Activated T-helper 1 cell treated with anti-CD3 and anti-CD28 coated beads, Interleukin-12 subunit alpha, Interleukin-12 subunit beta, Interleukin-2, Interleukin-4 antibody, amounts not matched to agents 30 ng/mL and 10 ng/mL and 1 ng/mL, durations not matched to agents 14 hours and 24 hours and 36 hours (primary cell): ENCODE measurements at regions of chr14 and their contacts with region 1.

Region 1: GRCh38 chr14:63770187-63770807 is 42.4 kb upstream of the SGPP1 start:
- DNase-seq: peak; percentile 33
- H3K4me3 Mint-ChIP-seq: no peak overlapping the region
- H3K27ac Mint-ChIP-seq: no peak overlapping the region
- H3K4me1 Mint-ChIP-seq: peaks cover 17% of the 10 kb centered on the region
- H3K27me3 Mint-ChIP-seq: no peaks in the 10 kb centered on the region

Region 2: DNA sequence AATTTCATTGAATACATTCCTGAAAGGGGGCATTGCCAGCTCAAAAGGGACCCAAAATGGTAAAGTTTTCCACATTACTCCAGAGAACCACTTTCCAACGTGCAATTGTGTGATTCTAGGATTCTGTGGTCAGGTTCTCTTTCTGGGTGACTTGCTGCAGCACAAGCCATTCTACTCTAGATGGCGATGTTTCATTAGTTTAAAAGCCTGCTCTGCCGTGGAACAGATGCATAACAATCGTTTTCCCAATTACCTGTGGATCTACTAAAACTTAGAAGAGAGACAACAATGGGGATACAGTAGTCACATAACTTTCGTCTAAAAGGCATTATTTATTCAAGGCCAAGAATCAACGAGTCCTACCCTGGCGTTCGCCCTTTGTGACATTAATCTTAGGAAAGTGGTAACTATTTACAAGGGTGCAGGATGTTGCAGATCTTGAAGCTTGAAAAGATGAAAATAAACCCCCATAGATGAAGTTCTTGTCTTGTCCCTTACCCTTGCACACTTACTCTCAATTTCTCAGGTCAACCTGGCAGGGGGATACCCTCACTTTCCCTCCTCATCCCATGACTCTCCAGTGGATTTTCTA is 1607.2 kb before region 1 on chr14:
- intact Hi-C with region 1: loop called (anchors 5 kb)
- DNase-seq: peak; percentile 3
- H3K4me3 Mint-ChIP-seq: no peak overlapping the region
- H3K27ac Mint-ChIP-seq: no peak overlapping the region
- H3K4me1 Mint-ChIP-seq: no peaks in the 10 kb centered on the region
- H3K27me3 Mint-ChIP-seq: peaks cover 5% of the 10 kb centered on the region

Region 3: DNA sequence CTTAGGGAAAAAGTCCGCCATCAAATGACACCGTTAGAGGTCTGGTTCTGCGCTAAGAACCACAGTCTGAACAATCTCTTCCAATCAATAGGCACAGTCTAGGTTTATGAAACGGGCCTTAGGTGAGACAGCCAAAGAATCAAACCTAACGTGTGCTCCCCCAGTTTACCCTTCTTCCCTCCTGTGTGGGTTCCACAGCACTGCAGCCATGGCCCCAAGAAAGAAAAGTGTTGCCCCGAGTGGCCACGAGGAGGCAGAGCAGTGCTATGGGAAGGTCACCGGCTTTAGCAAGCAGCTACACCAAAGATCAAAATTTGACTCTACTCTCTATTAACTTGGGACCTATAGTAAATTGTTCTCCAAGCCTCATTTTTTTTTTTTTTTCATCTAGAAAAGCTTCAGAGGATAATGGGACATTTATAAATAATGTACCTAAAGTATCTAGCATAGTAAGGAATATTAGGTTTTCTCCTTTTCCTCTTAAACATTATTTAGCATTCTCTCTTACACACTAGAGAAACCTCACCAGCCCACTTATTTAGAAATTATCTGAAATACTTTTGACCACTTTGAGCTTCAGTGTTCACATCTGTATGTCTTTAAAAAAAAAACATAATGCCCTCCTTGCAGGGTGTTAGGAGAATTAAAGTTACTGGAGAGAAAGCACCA is 381.4 kb before region 1 on chr14:
- intact Hi-C with region 1: loop called (anchors 1 kb)
- DNase-seq: peak; percentile 35
- H3K4me3 Mint-ChIP-seq: no peak overlapping the region
- H3K27ac Mint-ChIP-seq: no peak overlapping the region
- H3K4me1 Mint-ChIP-seq: peaks cover 8% of the 10 kb centered on the region
- H3K27me3 Mint-ChIP-seq: no peaks in the 10 kb centered on the region

Region 4: GRCh38 chr14:63632932-63633514 is 137.3 kb before region 1 on chr14:
- intact Hi-C with region 1: loop called (anchors 1 kb)
- DNase-seq: no peak
- H3K4me3 Mint-ChIP-seq: no peak overlapping the region
- H3K27ac Mint-ChIP-seq: no peak overlapping the region
- H3K4me1 Mint-ChIP-seq: peaks cover 18% of the 10 kb centered on the region
- H3K27me3 Mint-ChIP-seq: no peaks in the 10 kb centered on the region

Region 5: DNA sequence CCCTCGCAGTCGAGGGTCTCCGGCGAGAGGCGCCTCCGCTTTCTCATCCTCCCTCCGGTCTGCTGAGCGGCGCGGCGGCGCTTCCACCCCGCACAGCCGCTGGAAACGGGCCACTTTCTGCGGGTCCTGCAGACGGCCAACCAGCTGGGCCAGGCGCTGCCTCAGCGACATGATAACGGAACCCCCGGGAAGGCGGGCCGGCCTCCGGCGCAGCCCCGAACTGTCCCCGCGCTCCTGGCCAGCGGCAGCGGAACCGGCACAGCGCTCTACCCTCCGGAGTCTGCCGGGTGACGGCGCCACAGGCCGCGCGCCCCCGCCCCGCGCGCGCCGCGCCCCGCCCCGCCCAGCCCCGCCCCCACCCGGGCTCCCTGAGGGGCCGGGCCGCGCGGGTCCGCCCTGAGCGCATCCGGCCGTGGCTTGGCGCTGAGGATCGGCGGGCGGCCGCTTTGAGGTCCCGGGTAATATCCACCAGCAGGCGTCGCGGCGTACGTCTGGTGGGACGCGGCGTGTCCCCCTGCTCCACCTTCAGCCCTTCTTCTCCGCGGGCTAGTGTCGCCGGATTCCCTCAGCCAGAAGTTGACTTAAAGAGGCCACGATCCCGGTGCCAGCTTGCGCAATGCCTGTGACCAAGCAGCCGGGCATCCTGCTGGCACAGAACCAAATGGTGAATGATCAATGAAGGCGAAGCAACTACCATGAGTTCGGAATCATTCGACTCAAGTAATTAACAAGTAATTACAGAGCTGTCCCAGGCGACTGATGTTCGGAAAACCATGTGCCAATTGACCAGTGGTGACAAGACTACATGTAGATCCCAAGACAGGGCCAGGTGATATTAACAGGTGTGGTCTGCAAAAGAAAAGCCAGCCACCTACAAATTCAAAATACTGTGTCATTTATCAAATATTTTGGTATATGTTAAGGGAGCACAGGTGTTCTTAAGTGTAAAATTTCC is 42.2 kb before region 1 on chr14 and contains the start of gene SGPP1:
- intact Hi-C with region 1: loop called (anchors 1 kb)
- DNase-seq: peak; percentile 81
- H3K4me3 Mint-ChIP-seq: peak within 1 kb of the TSS; percentile 99
- H3K27ac Mint-ChIP-seq: peak within 1 kb of the TSS; percentile 99
- H3K4me1 Mint-ChIP-seq: peaks cover 33% of the 10 kb centered on the region
- H3K27me3 Mint-ChIP-seq: peaks cover 16% of the 10 kb centered on the region
- total RNA-seq, gene SGPP1: 14.7 and 14.8 TPM in 2 replicates

Region 6: DNA sequence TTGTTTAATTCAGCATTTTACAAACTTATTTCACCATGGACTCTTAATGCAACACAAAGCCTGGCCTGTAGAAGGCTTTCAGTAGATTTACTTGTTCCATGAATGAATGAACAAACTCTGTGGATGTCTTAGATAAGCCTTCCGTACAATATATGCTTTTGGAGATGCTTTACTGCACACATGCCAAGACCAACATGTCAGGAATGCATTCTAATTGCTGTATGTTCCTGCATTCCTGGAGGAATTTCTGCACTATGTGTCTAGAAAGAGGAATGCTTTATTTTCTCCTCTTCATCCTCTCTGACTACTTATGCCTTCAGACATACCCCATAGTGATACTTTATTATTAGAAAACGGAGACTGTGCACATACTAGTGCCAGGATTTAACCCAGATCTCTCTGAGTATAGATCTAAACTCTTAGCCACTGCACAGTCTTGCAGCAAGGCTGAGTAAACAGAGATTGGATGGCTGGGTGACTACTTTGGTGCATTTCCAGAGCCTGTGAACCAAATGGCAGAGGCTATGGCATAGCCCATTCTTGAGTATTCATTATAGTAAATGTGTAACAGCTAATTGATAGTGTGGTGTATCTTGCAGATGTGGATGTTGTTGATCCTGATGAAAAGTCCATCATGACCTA is 190.8 kb after region 1 on chr14:
- intact Hi-C with region 1: no loop called
- DNase-seq: no peak
- H3K4me3 Mint-ChIP-seq: no peak overlapping the region
- H3K27ac Mint-ChIP-seq: no peak overlapping the region
- H3K4me1 Mint-ChIP-seq: no peaks in the 10 kb centered on the region
- H3K27me3 Mint-ChIP-seq: no peaks in the 10 kb centered on the region